Right ventricle myocardium inferior (tissue), 1 donor: ENCODE measurements at regions of chr2 and their contacts with region 1.

Region 1: DNA sequence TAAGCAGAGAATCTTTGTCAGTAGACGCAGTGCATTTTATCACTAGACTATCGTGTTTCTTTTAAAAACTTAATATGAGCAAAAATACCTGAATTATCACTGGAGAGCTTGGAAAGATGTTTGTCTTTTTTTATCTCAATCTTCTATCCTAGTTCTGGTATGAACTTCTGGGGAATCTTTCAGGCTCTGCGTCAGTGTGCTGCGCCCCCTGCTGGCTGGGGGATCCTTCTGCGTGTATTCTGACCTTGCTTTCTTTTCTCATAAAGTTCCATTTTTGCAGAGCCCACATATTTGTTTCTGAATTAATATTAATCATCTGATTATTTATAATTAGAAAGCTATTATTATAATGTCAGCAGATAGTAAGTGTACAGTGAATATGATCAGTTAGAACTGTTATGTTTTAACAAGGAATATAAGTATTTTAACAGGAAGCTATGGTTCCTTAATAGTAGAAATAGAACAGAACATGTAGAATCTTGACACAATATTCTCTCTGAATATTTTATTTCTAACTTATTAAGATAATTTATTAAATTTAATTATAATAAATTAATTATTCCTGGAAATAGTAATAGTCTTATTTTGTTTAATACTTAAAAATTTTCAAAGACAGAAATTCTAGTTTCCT is 945.0 kb upstream of the CRIM1 start:
- DNase-seq: no peak
- ATAC-seq: no peak

Region 2: DNA sequence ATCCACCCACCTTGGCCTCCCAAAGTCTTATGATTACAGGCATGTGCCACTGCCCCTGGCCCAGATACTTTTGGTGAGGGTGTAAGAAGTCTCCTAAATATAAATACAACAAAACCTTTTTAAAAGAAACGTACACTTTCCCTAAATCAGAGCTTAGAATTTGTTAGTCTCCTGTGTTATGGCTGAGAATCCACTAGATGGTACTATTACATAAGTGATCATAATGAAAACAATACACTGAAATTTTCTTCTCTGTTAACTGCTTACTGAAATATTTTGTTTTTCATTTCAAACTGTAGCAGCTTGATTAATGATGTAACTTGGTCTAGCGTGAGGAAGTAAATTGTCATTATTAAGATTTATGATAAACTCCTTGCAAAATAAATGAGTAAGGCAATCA is 1736.6 kb before region 1 on chr2:
- intact Hi-C with region 1: loop called (anchors 10 kb)
- DNase-seq: no peak
- ATAC-seq: no peak

Region 3: DNA sequence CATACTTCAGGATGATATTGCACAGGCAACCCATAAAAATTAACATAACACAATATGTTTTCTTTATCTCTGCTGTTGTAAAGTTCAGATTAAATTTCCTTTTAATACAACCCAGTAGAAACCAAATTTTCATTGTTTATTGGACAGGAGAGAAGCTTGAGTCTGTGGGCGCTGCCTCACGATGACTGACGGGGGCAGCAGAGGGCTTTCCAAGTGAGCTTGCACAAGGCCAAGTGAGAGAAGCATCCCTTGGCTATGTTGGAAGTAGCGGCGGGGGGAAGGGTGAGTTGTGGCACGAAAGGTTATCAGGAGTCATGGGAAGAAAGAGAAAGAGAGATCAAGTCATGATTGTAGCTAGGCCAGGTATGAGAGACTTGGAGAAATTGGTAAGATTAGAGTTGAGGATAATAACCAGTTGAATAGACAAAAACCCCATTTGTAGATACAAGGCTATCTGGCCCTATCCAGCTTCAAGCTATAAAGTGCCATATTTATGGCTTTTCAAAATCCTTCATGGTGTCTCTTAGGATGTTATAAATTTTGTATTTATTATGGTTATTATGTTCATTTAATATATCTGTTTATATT is 1397.7 kb before region 1 on chr2:
- intact Hi-C with region 1: loop called (anchors 5 kb)
- DNase-seq: peak; percentile 52
- ATAC-seq: peak; percentile 56

Region 4: GRCh38 chr2:34096562-34097171 is 1313.9 kb before region 1 on chr2:
- intact Hi-C with region 1: loop called (anchors 2 kb)
- DNase-seq: no peak
- ATAC-seq: no peak

Region 5: DNA sequence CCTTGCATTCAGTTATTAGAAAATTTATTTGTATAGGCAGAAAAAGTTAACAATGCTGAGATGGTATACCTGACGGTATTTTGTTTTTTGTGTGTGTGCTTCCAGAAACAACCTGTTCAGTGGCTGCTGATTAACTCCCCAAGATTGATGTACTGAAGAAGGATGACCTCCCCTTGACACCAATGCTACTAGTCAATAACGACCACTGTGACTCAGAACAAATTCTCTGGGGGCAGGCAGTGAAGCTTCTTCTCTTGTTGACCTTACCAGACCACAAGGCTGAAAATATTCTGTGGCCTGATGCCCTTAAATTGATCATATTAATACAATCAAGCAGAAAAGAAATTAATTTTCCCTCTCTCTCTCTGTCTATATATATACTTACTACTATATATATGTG is 237.9 kb before region 1 on chr2:
- intact Hi-C with region 1: no loop called
- DNase-seq: no peak
- ATAC-seq: no peak

Region 6: GRCh38 chr2:35614640-35615039 is 204.1 kb after region 1 on chr2:
- intact Hi-C with region 1: no loop called
- DNase-seq: no peak
- ATAC-seq: no peak